Naive thymus-derived CD4-positive, alpha-beta T cell (primary cell): ENCODE measurements at regions of chr5 and their contacts with region 1.

Region 1: DNA sequence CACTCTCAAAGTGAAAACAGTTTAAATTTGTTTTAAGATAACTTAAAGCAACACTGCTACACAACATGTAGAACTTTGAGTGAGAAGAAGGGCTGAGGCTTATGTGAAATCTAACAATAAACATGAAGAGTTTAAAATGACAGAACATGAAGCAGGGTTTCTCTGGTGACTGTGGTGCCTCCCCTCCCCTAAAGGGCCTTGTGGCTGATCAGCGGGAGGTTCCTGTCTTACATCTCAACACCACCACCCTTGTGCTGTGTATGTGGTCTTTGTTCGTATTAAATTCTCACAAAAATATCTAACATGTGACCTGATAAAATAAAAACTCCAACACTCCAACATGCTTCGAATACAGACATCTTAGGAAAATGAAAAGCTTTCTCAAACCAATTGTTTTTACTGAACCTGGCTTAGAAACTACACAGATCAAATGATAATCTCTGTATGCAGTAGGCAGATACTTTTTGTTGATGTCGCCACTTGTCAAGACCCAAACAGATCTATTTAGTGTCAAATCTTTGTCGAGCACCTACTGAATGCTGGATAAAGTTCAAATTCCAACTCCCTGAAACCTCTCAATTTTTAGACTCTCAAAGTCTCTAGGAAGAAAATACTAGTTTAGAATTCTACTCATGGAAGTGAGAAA is 9.9 kb upstream of the IQGAP2 start:
- DNase-seq: peak in 6 of 9 donors; percentile 26 to 52 (median 43)
- ATAC-seq: peak; percentile 88
- H3K4me3 ChIP-seq: no peak overlapping the region
- H3K4me3 Mint-ChIP-seq: peak overlapping the region; percentile 10 to 74 (median 57)
- H3K27ac ChIP-seq: peak overlapping the region; percentile 33
- H3K27ac Mint-ChIP-seq: peak overlapping the region in 8 of 9 donors; percentile 3 to 89 (median 82)
- H3K4me1 ChIP-seq: peaks cover 48 to 56% of the 10 kb centered on the region in 2 donors
- H3K4me1 Mint-ChIP-seq: peaks cover 37 to 71% (median 67%) of the 10 kb centered on the region in 7 donors
- H3K27me3 ChIP-seq: no peaks in the 10 kb centered on the region
- H3K27me3 Mint-ChIP-seq: peaks cover 0 to 3% (median 0%) of the 10 kb centered on the region in 5 donors

Region 2: GRCh38 chr5:76082772-76083554 is 310.2 kb before region 1 on chr5 and contains the start of gene SV2C:
- CTCF ChIA-PET with region 1: no interaction called
- POLR2A ChIA-PET with region 1: no interaction called
- intact Hi-C with region 1: no loop called
- DNase-seq: peak in 2 of 9 donors; percentile 16 to 52
- ATAC-seq: peak; percentile 22
- H3K4me3 ChIP-seq: no peak within 1 kb of the TSS
- H3K4me3 Mint-ChIP-seq: peak within 1 kb of the TSS; percentile 21 to 80 (median 66)
- H3K27ac ChIP-seq: no peak within 1 kb of the TSS
- H3K27ac Mint-ChIP-seq: peak within 1 kb of the TSS in 1 of 9 donors; percentile 23
- H3K4me1 ChIP-seq: peaks cover 6 to 11% of the 10 kb centered on the region in 2 donors
- H3K4me1 Mint-ChIP-seq: peaks cover 16 to 36% (median 23%) of the 10 kb centered on the region in 7 donors
- H3K27me3 ChIP-seq: peaks cover 0 to 2% of the 10 kb centered on the region in 2 donors
- H3K27me3 Mint-ChIP-seq: peaks cover 70 to 89% (median 77%) of the 10 kb centered on the region in 5 donors
- total RNA-seq, gene SV2C: not detected

Region 3: GRCh38 chr5:76379316-76379715 is 13.8 kb before region 1 on chr5:
- CTCF ChIA-PET with region 1: interaction called, 3 read pairs
- POLR2A ChIA-PET with region 1: interaction called, 4 read pairs
- intact Hi-C with region 1: loop called in 1 of 2 experiments (anchors 2 kb)
- DNase-seq: no peak
- ATAC-seq: peak; percentile 57
- H3K4me3 ChIP-seq: no peak overlapping the region
- H3K4me3 Mint-ChIP-seq: peak overlapping the region in 4 of 10 donors; percentile 18 to 33 (median 26)
- H3K27ac ChIP-seq: no peak overlapping the region
- H3K27ac Mint-ChIP-seq: peak overlapping the region in 4 of 9 donors; percentile 1 to 67 (median 46)
- H3K4me1 ChIP-seq: peaks cover 16 to 21% of the 10 kb centered on the region in 2 donors
- H3K4me1 Mint-ChIP-seq: peaks cover 23 to 51% (median 38%) of the 10 kb centered on the region in 7 donors
- H3K27me3 ChIP-seq: no peaks in the 10 kb centered on the region
- H3K27me3 Mint-ChIP-seq: peaks cover 0 to 2% (median 0%) of the 10 kb centered on the region in 5 donors

Region 4: DNA sequence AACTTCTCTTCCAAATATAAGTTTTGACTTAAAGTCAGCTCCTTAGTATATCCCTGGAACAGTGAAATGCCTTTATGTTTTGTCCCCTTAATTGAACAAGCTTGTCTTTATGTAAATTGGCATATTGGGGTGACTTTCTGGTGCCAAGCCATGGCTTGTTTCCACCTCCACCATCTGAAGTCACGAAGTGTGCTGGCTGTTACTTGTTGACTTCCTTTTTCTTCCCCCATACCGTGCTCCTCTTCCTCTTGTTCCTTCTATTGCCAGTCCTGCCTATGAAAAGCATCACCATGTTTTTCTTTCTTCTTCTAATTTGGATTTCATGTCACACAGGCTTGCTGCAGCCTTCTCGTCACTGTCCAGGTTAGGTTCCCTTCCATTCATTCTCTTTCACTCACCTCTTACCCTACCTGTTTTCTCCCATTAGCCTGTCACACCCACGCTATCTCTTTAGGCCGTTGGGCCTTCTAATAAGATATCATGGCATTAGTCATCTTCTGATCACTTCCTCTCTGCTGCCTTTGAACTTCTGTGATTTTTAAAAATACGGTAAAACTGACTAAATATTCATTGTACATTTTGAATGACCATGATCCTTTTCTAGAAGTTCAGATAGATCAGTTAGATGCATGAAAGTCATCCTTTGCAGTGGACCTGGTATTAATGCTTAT is 58.0 kb after region 1 on chr5:
- CTCF ChIA-PET with region 1: no interaction called
- POLR2A ChIA-PET with region 1: no interaction called
- intact Hi-C with region 1: no loop called
- DNase-seq: no peak
- ATAC-seq: peak; percentile 42
- H3K4me3 ChIP-seq: no peak overlapping the region
- H3K4me3 Mint-ChIP-seq: peak overlapping the region in 6 of 10 donors; percentile 2 to 60 (median 14)
- H3K27ac ChIP-seq: no peak overlapping the region
- H3K27ac Mint-ChIP-seq: peak overlapping the region in 3 of 9 donors; percentile 35 to 58 (median 49)
- H3K4me1 ChIP-seq: peaks cover 21 to 22% of the 10 kb centered on the region in 2 donors
- H3K4me1 Mint-ChIP-seq: peaks cover 31 to 64% (median 56%) of the 10 kb centered on the region in 7 donors
- H3K27me3 ChIP-seq: no peaks in the 10 kb centered on the region
- H3K27me3 Mint-ChIP-seq: no peaks in the 10 kb centered on the region

Region 5: DNA sequence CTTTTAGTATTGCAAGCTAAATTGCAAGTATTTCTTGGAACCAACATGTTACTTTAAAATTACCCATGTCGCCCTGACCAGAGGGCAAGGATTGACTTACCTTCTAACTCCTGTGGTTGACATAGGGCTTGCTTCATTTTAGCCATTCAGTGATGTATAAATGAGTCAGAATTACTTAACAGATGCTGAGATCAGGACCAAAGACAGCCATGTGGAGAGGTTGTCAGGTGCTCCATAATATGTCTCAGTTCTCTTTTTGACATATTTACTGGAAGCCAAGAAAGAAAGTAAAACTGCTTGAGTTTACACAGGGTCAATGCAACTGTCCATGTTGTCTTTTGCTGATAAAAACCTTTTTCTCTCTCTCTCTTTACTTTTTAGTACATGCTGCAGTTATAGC is 196.9 kb after region 1 on chr5:
- CTCF ChIA-PET with region 1: no interaction called
- POLR2A ChIA-PET with region 1: no interaction called
- intact Hi-C with region 1: no loop called
- DNase-seq: no peak
- ATAC-seq: no peak
- H3K4me3 ChIP-seq: no peak overlapping the region
- H3K4me3 Mint-ChIP-seq: no peak overlapping the region
- H3K27ac ChIP-seq: no peak overlapping the region
- H3K27ac Mint-ChIP-seq: no peak overlapping the region
- H3K4me1 ChIP-seq: no peaks in the 10 kb centered on the region
- H3K4me1 Mint-ChIP-seq: peaks cover 0 to 13% (median 0%) of the 10 kb centered on the region in 7 donors
- H3K27me3 ChIP-seq: no peaks in the 10 kb centered on the region
- H3K27me3 Mint-ChIP-seq: no peaks in the 10 kb centered on the region